Sigmoid colon (tissue), 7 donors: ENCODE measurements at regions of chr17 and their contacts with region 1.

Region 1: DNA sequence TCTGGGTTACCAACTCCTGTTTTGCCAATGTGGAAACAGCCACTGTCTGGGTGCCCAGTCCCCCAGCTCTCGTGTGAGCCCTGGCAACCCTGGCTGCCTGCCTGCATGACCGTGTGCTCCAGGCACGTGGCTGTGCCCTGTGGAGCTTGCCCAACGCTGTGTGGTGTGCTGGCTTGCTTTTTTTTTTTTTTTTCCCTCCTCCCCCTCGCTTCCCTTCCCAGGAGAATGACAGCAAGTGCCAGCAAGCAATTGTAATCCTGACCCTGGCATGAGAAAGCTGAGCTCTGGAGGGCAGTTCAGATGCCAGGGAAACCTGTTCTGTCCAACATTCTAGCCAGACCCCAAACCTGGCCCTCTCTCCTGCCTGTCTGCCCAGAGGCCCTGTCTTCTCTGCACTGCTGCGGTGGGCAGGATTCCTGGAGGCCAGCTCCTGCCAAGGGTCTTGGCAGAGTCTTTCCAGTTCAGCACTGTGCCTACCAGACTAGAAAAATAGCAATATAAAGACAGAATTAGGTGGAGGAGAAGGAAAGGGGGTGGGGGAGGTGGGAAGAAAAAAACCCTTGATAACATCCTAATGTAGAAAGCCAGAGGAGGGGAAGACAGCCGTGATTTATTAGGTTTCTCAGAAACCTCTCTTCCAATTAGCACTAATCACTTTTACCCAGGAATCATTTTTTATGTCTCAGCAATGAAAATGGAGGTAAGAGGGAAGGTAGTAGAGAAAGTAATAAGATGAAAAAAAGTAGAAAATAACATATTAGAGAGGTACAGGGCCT is 9.0 kb downstream of the HLF start:
- DNase-seq: peak; percentile 93
- H3K4me3 ChIP-seq: peak overlapping the region in 2 of 4 donors; percentile 11 to 14
- H3K27ac ChIP-seq: peak overlapping the region; percentile 81 to 97 (median 95)
- H3K4me1 ChIP-seq: peaks cover 0 to 98% (median 88%) of the 10 kb centered on the region in 4 donors
- H3K27me3 ChIP-seq: no peaks in the 10 kb centered on the region
- CTCF ChIP-seq: no peak
- EP300 ChIP-seq: peak in 3 of 4 donors; percentile 24 to 69 (median 49)
- POLR2A ChIP-seq: no peak

Region 2: GRCh38 chr17:55285340-55286301 is 11.9 kb after region 1 on chr17:
- intact Hi-C with region 1: loop called (anchors 2 kb)
- DNase-seq: peak; percentile 100
- H3K4me3 ChIP-seq: peak overlapping the region in 2 of 4 donors; percentile 2 to 9
- H3K27ac ChIP-seq: peak overlapping the region; percentile 88 to 97 (median 91)
- H3K4me1 ChIP-seq: peaks cover 0 to 89% (median 85%) of the 10 kb centered on the region in 4 donors
- H3K27me3 ChIP-seq: no peaks in the 10 kb centered on the region
- CTCF ChIP-seq: no peak
- EP300 ChIP-seq: peak; percentile 46 to 90 (median 79)
- POLR2A ChIP-seq: no peak